Ascending aorta (tissue), 2 donors: ENCODE measurements at regions of chr1 and their contacts with region 1.

Region 1: GRCh38 chr1:8121261-8122170 is 95.4 kb upstream of the ERRFI1 start:
- DNase-seq: peak; percentile 67 to 95
- H3K4me3 ChIP-seq: peak overlapping the region; percentile 1 to 49
- H3K27ac ChIP-seq: peak overlapping the region; percentile 95 to 96
- H3K4me1 ChIP-seq: peaks cover 25 to 61% of the 10 kb centered on the region in 2 donors
- H3K27me3 ChIP-seq: no peaks in the 10 kb centered on the region
- CTCF ChIP-seq: no peak

Region 2: DNA sequence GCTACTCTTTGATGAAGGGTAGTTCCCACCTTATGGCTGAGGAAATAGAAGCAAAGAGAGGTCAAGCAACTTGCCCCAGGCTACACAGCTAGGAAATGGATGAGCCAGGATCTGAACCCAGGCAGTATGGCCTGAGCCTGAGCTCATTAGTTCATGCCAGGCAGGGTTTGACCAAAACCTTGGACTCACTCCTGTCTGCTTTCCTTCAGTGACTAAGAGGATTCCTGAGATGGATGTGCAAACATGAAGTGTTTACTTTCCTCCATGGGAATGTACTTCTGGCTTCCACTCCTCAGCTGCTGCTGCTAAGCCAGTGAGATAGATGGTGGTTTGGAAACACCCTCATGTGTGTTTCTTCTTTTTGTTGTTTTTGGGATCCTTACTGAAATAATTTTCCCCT is 60.3 kb before region 1 on chr1:
- intact Hi-C with region 1: loop called (anchors 2 kb)
- DNase-seq: peak; percentile 28 to 84
- H3K4me3 ChIP-seq: peak overlapping the region in 1 of 2 donors; percentile 49
- H3K27ac ChIP-seq: peak overlapping the region; percentile 78 to 89
- H3K4me1 ChIP-seq: peaks cover 0 to 33% of the 10 kb centered on the region in 2 donors
- H3K27me3 ChIP-seq: no peaks in the 10 kb centered on the region
- CTCF ChIP-seq: no peak

Region 3: DNA sequence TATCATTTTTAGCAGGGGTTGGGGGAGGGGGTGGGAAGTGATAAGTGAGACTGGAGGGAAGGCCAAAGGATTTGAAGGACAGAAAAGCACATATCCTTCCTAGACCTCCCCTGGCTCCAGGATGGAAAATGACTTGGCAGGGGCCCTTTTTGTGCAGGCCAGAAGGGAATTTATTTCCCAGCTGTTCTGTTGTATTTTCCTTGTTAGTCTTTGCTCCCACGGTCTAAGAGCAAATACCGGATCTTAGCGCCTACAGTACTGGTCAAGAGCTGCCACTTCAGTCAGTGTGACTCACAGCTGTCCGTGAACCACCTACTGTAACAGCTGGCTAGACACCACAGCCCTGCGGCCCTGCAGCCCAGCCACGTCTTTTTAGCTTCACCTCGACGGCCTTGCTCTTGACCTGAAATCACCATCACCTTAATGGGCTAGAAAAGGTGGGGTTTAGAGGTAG is 44.4 kb before region 1 on chr1:
- intact Hi-C with region 1: loop called (anchors 1 kb)
- DNase-seq: peak in 1 of 2 donors; percentile 89
- H3K4me3 ChIP-seq: no peak overlapping the region
- H3K27ac ChIP-seq: peak overlapping the region; percentile 31 to 79
- H3K4me1 ChIP-seq: peaks cover 14 to 30% of the 10 kb centered on the region in 2 donors
- H3K27me3 ChIP-seq: no peaks in the 10 kb centered on the region
- CTCF ChIP-seq: peak in 1 of 3 experiments; percentile 17

Region 4: GRCh38 chr1:8097077-8097799 is 24.3 kb before region 1 on chr1:
- intact Hi-C with region 1: loop called (anchors 1 kb)
- DNase-seq: no peak
- H3K4me3 ChIP-seq: no peak overlapping the region
- H3K27ac ChIP-seq: peak overlapping the region; percentile 82 to 85
- H3K4me1 ChIP-seq: peaks cover 6 to 22% of the 10 kb centered on the region in 2 donors
- H3K27me3 ChIP-seq: no peaks in the 10 kb centered on the region
- CTCF ChIP-seq: no peak

Region 5: DNA sequence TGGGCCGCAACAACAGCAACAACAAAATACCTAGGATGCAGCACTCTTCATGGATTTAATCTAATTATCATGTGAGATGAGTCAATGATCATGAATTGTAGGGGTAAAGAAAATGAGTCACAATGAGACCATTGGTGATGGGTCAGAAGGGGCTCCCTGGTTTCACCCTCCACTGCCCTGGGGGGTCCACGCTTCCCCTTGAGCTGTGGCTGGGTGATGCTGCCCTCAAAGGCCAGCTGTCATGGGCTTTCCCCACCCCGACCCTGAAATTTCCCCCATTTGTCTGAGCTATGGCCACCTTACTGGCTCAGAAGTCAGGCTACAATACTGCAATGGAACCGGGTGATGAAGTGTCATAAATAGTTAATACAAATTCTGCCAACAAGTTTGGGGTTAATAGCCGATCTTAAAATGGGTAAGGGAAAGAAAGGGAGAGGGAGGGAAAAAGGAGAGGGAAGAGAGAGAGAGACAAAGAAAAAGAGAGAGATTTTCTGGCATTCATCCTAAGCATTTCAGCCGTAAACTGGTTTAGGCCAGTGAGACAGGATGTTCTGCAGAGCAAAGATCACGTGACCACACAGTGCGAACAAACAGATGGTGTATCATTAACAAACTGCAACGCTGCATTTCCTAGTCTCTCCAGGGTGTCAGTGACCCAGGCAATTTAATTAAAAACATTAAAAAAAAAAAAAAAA is 48.0 kb after region 1 on chr1:
- intact Hi-C with region 1: no loop called
- DNase-seq: no peak
- H3K4me3 ChIP-seq: no peak overlapping the region
- H3K27ac ChIP-seq: peak overlapping the region in 1 of 2 donors; percentile 18
- H3K4me1 ChIP-seq: peaks cover 0 to 9% of the 10 kb centered on the region in 2 donors
- H3K27me3 ChIP-seq: no peaks in the 10 kb centered on the region
- CTCF ChIP-seq: no peak

Region 6: GRCh38 chr1:8182034-8182761 is 60.7 kb after region 1 on chr1:
- intact Hi-C with region 1: no loop called
- DNase-seq: no peak
- H3K4me3 ChIP-seq: no peak overlapping the region
- H3K27ac ChIP-seq: no peak overlapping the region
- H3K4me1 ChIP-seq: no peaks in the 10 kb centered on the region
- H3K27me3 ChIP-seq: no peaks in the 10 kb centered on the region
- CTCF ChIP-seq: no peak

Region 7: GRCh38 chr1:8202182-8202905 is 80.8 kb after region 1 on chr1:
- intact Hi-C with region 1: loop called (anchors 2 kb)
- DNase-seq: peak; percentile 57 to 94
- H3K4me3 ChIP-seq: peak overlapping the region in 1 of 2 donors; percentile 32
- H3K27ac ChIP-seq: peak overlapping the region; percentile 97 to 99
- H3K4me1 ChIP-seq: peaks cover 17 to 52% of the 10 kb centered on the region in 2 donors
- H3K27me3 ChIP-seq: no peaks in the 10 kb centered on the region
- CTCF ChIP-seq: no peak

Region 8: GRCh38 chr1:8314346-8315280 is 193.1 kb after region 1 on chr1:
- intact Hi-C with region 1: loop called (anchors 10 kb)
- DNase-seq: peak in 1 of 2 donors; percentile 83
- H3K4me3 ChIP-seq: no peak overlapping the region
- H3K27ac ChIP-seq: no peak overlapping the region
- H3K4me1 ChIP-seq: peaks cover 0 to 14% of the 10 kb centered on the region in 2 donors
- H3K27me3 ChIP-seq: no peaks in the 10 kb centered on the region
- CTCF ChIP-seq: peak; percentile 84 to 92 (median 87)